Dendritic cell treated with granulocyte-macrophage colony-stimulating factor and Interleukin-4, amounts not matched to agents 40 ng/mL and 50 ng/mL, for 4 days (primary cell): ENCODE measurements at regions of chr5 and their contacts with region 1.

Region 1: GRCh38 chr5:6632917-6633468 is at the starts of genes NSUN2 and SRD5A1:
- H3K4me3 Mint-ChIP-seq: peak within 1 kb of the TSS; percentile 93
- H3K27ac Mint-ChIP-seq: peak within 1 kb of the TSS; percentile 98
- H3K4me1 Mint-ChIP-seq: peaks cover 40% of the 10 kb centered on the region
- H3K27me3 Mint-ChIP-seq: no peaks in the 10 kb centered on the region

Region 2: GRCh38 chr5:6377905-6378765 is 254.9 kb before region 1 on chr5 and contains the start of gene MED10:
- intact Hi-C with region 1: loop called (anchors 5 kb)
- H3K4me3 Mint-ChIP-seq: peak within 1 kb of the TSS; percentile 92
- H3K27ac Mint-ChIP-seq: peak within 1 kb of the TSS; percentile 91
- H3K4me1 Mint-ChIP-seq: peaks cover 22% of the 10 kb centered on the region
- H3K27me3 Mint-ChIP-seq: peaks cover 5% of the 10 kb centered on the region

Region 3: DNA sequence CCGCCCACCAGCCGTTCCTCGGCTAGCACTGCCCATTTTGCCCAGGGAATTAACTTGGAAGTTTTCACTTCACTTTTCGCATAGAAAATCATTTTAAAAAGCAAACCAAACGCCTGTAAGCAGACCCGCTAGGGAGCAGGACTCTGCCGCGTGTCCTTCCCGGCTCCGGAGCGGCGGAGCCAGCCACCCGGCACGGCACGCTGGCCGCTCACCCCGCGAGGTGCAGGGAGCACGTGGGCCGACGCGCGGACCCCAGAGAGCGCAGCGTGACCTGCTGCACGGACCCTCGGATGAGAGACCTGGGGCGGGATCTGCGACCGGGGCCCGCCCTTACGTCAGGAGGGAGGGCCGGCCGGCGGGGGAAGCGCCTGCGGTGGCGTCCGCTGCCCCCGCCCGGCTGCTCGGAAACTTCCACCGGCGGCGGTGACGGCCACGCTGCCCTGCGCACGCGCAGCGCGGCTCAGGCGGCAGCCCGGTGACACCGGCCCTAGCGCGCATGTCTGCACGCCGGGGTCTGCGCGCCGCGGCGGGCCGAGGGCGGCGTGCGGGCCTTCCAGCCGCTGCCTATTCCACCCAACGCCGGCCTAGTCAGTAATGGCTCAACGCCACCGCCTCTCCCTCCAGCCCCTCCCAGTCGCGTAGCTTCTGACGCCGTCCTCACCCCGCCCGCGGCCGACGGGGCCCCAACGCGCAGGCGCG is 79.7 kb after region 1 on chr5:
- intact Hi-C with region 1: loop called (anchors 1 kb)
- H3K4me3 Mint-ChIP-seq: peak overlapping the region; percentile 84
- H3K27ac Mint-ChIP-seq: peak overlapping the region; percentile 93
- H3K4me1 Mint-ChIP-seq: peaks cover 42% of the 10 kb centered on the region
- H3K27me3 Mint-ChIP-seq: peaks cover 8% of the 10 kb centered on the region

Region 4: DNA sequence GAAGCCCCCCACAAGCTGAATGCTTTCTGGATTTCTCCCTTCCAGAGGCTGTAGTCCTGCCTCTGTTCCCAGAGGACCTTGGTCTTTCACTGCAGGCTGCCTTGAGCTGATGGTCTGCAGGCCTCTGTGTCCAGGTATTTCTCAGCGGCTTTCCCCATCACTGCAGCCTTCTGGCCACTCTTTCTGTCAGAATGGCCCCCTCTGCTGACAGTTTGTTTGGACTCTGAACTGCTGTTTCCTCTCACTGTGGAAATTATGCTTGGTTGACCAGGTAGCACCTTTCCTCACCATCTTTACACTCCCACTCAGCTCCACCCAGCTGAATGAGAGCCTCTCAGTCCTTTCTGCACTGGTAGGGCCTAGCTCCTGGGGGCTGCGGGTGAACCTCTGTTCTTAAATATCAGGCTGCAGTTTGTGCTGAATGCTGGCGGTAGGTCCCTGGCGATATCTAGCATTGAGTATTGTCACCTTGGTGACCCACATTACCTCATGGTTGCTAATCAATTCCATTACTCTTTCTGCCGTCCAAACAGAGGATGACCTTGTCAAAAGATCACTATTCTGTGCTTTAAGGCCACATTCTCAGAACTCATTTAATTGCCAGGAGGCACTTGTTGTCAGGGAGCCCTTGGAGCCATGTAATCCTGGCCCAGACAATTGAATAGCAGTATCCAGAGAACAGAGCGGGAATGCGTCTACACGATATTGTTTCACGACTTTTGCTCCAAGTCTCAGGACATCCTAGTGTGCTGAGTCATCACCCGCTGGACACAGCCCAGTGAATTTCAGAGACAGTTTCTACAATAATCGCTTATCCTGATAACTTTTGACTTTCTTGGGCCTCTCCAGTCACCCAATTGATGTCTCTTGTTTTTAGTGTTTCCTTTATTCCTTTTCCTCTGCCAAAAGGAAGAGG is 310.5 kb after region 1 on chr5:
- intact Hi-C with region 1: no loop called
- H3K4me3 Mint-ChIP-seq: no peak overlapping the region
- H3K27ac Mint-ChIP-seq: no peak overlapping the region
- H3K4me1 Mint-ChIP-seq: no peaks in the 10 kb centered on the region
- H3K27me3 Mint-ChIP-seq: no peaks in the 10 kb centered on the region